Colonic mucosa (tissue), 4 donors: ENCODE measurements at regions of chr1 and their contacts with region 1.

Region 1: DNA sequence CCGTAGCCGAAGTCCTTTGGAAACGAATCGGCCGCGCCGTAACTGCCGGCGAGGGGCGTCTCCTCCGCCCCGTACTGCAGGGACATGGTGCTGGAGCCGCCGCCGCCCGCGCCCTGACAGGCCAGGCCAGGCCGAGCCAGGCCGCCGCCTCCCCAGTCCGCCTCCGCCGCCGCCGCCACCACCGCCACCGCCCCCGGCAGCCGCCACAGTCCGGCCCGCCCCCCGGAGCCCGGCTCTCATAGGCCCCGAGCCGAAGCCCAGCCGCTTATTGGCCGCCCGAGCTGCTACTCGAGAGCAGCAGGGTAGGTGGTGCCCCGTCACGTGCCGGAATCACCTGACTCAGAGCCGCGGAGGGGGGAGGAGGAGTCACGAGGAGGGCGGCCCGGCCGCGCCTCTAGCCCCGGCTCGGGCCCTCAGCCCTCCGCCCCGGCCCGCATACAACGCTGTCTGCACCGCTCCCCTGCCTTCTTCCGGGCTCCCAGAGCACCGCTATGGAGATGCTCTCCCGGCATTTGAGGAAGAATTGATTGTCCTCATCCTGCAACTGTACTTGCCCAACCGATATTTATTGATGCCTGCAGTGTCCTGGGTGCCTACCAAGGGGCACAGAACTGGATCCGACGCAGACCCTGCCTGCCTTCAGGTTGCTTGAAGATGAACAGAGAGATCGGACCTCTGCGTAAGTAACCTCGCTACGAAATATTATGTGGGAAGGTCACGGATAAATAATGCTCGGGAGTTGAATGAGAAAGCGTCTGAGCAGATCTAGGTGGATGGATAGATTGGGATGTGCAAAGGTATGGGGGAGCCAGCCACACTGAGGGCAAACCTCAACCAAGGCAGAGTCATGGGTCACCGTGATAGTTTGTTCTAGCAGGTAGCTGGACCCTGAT is at the start of gene RRAGC:
- DNase-seq: peak; percentile 100
- H3K4me3 ChIP-seq: peak within 1 kb of the TSS; percentile 63
- H3K27ac ChIP-seq: peak within 1 kb of the TSS; percentile 87
- H3K4me1 ChIP-seq: peaks cover 9% of the 10 kb centered on the region
- H3K27me3 ChIP-seq: no peaks in the 10 kb centered on the region
- CTCF ChIP-seq: no peak
- total RNA-seq, gene RRAGC: 14.7 to 30.6 TPM

Region 2: GRCh38 chr1:39081266-39082009 is 221.6 kb after region 1 on chr1:
- intact Hi-C with region 1: loop called (anchors 10 kb)
- DNase-seq: no peak
- H3K4me3 ChIP-seq: peak overlapping the region; percentile 36
- H3K27ac ChIP-seq: no peak overlapping the region
- H3K4me1 ChIP-seq: no peaks in the 10 kb centered on the region
- H3K27me3 ChIP-seq: peaks cover 20% of the 10 kb centered on the region
- CTCF ChIP-seq: no peak

Region 3: DNA sequence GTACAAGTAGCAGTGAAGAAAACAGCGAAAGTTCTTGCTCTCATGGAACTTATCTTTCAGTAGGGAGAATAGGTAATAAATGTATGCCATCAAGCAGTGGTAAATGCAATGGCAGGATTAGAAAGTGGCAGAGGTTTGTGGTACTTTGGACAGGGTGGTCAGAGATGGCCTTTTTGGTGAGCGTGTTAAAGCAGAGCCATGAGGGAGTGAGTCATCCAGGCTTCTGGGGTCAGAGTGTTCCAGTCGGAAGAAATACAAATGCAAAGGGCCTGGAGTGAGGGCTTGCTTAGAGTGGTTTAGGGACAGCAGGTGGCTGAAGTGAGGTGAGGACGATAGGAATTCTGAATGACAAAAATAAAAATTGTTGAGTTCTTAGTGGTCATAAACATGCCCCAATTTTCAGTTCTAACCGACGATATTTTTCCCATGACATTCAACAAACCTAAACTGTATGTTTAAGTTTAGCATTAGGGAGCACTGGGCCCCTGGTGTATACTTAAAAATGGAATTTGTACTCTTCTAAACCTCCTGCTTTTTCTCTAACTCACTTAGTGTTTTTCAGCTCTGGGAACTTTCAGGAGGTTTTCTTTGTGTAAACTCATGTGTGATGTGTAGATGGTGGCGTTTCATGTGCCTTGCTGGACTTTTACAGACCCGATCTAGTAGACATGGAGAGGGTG is 422.9 kb after region 1 on chr1:
- intact Hi-C with region 1: no loop called
- DNase-seq: no peak
- H3K4me3 ChIP-seq: no peak overlapping the region
- H3K27ac ChIP-seq: no peak overlapping the region
- H3K4me1 ChIP-seq: no peaks in the 10 kb centered on the region
- H3K27me3 ChIP-seq: no peaks in the 10 kb centered on the region
- CTCF ChIP-seq: no peak